ENCODE measurements at regions of chr1 and their contacts with region 1.

Region 1: DNA sequence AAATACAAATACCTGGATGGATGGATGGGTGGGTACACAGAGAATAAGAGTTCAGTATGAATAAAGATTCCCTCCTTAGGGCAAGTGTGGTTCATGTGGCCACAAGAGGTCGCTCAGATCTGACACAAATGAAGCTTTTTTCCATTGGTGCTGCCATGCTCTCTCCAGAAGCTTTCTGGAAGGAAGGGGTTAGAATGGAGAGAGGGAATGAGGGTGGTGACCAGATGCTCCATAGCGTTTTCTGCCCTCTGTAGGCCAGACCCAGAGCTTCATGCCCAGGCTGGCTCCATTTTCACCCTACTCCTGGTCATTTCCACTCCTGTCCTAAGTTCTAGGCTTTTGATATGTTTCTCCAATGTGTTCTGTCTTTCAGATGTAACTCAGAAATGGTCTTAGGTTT is 3.3 kb upstream of the FCRL6 start:
- DNase-seq: no peak
- ATAC-seq: peak; percentile 94

Region 2: GRCh38 chr1:159535907-159536306 is 263.0 kb before region 1 on chr1 and contains the start of gene OR10J5:
- intact Hi-C with region 1: no loop called
- DNase-seq: no peak
- ATAC-seq: no peak
- total RNA-seq, gene OR10J5: not detected

Region 3: GRCh38 chr1:159686599-159687299 is 112.1 kb before region 1 on chr1:
- intact Hi-C with region 1: no loop called
- DNase-seq: no peak
- ATAC-seq: no peak

Region 4: DNA sequence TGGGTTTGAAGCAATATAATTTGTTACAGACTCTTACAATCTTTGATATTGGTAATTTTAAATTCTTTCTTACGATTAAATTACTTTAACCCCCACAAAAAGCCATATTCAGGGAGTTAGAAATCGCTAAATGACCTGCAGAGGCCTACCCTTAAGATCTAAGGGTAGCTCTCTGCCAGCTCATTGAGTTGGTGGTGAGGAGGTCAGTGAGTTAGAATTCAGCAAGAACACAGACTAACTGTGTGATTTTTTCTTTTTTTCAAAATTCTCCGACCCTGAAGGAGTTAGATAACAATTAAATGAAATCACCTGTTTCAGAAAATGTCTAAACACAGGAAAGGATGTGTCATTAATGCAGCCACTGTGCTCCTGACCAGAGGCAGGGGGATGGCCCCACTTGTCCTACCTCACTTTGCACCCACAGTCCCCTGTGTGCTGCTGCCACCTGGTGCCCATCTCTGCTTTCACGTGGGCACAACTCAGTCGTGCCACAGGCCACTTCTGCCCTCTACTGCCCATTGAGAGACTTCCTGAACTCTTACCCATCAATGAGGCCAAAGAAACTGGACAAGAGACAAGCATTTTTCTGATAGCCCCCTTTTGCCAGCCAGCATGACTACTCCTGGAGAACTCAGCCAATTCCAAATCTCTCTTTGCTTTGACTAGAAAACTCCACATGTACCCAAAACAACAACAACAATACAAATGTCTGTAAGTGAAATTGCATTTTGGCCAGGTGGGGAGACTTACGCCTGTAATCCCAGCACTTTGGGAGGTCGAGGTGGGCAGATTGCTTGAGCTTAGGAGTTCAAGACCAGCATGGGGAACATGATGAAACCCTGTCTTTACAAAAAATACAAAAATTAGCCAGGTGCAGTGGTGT is 92.6 kb after region 1 on chr1:
- intact Hi-C with region 1: loop called (anchors 2 kb)
- DNase-seq: peak; percentile 88
- ATAC-seq: peak; percentile 93

Region 5: DNA sequence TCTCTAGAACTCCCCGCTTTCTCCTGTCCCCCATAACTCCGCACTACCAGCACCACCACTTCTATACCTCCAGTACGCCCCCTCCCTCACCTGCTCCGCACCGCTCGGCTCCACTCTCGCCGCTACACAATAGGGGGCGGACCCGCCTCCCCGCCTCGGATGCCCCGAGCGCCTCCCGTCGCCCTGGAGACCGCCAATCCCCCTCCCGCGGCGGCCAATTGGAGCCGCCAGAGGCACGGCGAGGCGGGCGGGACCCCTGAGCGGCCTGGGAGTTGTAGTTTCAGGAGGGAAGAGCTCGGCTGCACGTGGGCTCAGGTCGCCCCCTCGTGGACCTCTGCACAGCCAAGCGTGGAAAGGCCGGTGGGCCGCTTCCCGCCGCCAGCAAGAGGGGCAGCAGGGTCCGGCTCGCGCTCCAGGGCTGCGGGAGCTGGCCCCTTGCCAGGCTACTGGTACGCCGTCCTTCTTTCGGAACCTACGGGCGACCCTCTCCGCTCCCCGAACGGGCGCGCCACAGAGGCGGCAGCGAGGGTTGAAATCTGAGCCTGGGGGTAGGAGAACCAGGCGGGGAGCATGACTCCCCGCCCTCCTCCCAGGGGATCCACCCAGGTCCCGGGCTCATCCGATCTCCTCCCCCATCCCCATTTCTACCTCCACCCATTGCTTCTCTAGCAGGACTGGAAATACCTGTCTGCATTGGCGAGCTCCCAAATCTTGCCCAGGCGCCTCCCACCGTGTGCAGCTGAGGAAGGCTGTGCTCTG is 146.8 kb after region 1 on chr1 and contains the start of gene IGSF9:
- intact Hi-C with region 1: loop called (anchors 5 kb)
- DNase-seq: peak; percentile 89
- ATAC-seq: peak; percentile 97
- total RNA-seq, gene IGSF9: 0.30 TPM

Region 6: DNA sequence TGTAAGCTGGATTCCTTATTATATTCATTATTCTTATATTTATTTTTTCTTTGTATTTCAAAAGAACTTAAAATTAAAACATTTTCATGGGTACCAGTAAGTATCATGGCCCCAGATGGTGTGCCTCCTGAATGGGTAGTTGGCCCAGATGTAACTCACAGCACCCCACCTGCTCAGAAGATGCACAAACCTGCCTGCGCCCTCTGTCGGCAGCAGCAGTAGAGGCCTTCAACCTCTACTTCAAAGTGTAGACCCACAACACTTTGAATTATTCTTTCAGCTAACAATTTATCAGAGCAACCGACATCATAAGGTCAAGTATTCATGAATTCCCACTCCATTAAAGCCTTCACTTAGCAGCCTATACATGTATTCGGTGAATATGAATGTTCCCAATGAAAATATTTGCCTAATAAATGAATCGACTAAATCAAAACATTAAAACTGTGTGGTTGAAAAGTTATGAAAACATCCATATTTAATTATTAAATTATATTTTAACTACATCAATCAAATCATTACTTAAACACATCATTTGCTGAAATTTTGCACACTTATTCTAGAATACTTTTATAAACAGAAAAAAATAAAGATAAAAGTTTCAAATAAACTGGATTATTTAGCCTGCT is 207.5 kb after region 1 on chr1:
- intact Hi-C with region 1: loop called (anchors 5 kb)
- DNase-seq: peak; percentile 84
- ATAC-seq: peak; percentile 88